ENCODE measurements at regions of chr6 and their contacts with region 1.

Region 1: DNA sequence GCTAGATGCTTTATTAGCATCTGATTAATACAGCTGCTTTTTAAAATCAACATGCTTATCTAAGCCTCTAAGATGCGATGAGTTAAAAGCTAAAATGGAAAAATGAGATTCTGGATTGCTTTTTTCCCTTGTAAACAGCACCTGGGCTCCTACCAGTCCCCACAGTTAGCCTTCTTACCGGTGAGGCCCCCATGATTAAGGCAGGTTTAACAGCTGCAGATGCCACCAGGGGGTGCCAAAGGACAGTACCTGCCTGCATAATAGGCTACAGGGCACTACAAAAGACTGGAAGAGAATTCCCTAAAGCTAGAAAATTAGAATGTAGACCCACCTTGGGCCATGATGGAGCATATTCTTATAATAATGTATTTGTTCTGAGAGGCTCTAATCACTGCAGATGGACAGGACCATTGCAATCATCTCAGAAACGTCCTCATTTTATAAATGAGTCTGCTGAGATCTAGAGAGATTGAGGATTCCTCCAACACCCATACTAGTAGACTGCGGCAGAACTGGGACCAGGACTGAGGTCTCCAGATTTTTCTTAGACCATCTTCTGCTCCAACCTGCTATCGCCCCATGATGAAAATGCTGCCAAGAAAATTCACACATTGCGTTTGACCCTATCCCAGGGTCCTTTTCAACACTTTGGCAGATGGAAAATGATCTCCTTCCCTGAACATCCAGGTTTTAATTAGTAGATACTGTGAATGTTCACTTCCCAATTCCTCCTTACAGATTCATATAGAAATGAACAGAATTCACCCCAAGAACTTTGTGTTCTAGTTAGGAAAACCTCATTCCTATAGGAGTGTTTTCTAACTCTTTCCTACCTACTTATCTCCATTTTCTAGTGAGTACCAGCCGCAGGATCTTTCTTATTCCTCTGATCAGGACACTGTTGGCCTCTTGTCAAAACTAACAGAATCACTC is 148.8 kb downstream of the RPS12 start:
- DNase-seq: peak; percentile 82
- H3K4me3 ChIP-seq: no peak overlapping the region
- H3K27ac ChIP-seq: no peak overlapping the region
- H3K4me1 ChIP-seq: peaks cover 20% of the 10 kb centered on the region
- H3K27me3 ChIP-seq: peaks cover 4 to 6% of the 10 kb centered on the region in 2 experiments
- CTCF ChIP-seq: peak; percentile 71 to 75
- POLR2A ChIP-seq: no peak

Region 2: GRCh38 chr6:132669690-132670291 is 293.4 kb before region 1 on chr6:
- CTCF ChIA-PET with region 1: interaction called, 3 read pairs
- POLR2A ChIA-PET with region 1: no interaction called
- dilution Hi-C with region 1: no loop called
- intact Hi-C with region 1: loop called (anchors 1 kb)
- DNase-seq: peak; percentile 56
- H3K4me3 ChIP-seq: no peak overlapping the region
- H3K27ac ChIP-seq: no peak overlapping the region
- H3K4me1 ChIP-seq: peaks cover 2% of the 10 kb centered on the region
- H3K27me3 ChIP-seq: no peaks in the 10 kb centered on the region
- CTCF ChIP-seq: peak in 1 of 2 donors; percentile 18
- POLR2A ChIP-seq: no peak

Region 3: DNA sequence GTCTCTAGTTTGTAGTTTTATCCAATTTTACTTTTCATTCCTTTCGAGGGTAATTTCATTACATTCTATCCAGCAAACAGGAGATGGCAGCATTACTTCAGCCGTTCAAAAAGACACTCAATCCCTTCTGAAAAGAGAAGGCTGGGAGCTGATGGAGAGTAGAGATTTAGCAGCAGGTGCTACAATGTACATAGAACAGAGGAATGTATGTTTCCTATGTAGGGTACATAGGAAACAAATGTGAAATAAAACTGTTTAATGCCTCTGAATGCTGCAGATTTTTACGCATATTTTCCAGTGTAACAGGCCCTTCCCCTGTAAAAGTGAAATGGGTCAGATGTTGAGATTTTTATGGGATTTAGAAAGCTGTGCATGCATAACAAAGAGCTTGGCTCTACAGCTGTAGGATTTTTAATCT is 132.9 kb before region 1 on chr6:
- CTCF ChIA-PET with region 1: interaction called, 20 read pairs
- POLR2A ChIA-PET with region 1: no interaction called
- dilution Hi-C with region 1: no loop called
- intact Hi-C with region 1: loop called (anchors 5 kb)
- DNase-seq: peak; percentile 34
- H3K4me3 ChIP-seq: no peak overlapping the region
- H3K27ac ChIP-seq: no peak overlapping the region
- H3K4me1 ChIP-seq: no peaks in the 10 kb centered on the region
- H3K27me3 ChIP-seq: no peaks in the 10 kb centered on the region
- CTCF ChIP-seq: peak in 1 of 2 donors; percentile 18
- POLR2A ChIP-seq: no peak

Region 4: DNA sequence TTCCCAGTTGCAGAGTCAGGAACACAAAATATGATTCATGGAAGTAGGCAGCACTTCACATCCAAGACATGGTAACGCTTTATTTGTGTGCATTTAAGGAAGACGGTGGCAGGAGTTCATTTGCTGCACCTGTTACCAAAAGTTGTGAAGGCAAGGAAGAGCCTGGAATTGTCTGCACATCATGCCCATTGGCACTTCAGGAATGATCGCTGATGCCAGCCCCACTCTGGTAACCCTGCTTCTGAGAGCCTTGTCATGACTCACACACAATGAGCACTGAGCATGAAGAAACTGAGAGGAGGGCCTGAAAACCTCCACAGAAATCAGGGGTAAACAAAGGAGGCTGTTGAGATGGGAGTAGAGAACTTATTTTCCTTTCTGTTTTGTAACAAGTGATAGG is 32.2 kb after region 1 on chr6:
- CTCF ChIA-PET with region 1: no interaction called
- POLR2A ChIA-PET with region 1: no interaction called
- dilution Hi-C with region 1: no loop called
- intact Hi-C with region 1: no loop called
- DNase-seq: no peak
- H3K4me3 ChIP-seq: no peak overlapping the region
- H3K27ac ChIP-seq: no peak overlapping the region
- H3K4me1 ChIP-seq: no peaks in the 10 kb centered on the region
- H3K27me3 ChIP-seq: peaks cover 0 to 4% of the 10 kb centered on the region in 2 experiments
- CTCF ChIP-seq: no peak
- POLR2A ChIP-seq: no peak

Region 5: DNA sequence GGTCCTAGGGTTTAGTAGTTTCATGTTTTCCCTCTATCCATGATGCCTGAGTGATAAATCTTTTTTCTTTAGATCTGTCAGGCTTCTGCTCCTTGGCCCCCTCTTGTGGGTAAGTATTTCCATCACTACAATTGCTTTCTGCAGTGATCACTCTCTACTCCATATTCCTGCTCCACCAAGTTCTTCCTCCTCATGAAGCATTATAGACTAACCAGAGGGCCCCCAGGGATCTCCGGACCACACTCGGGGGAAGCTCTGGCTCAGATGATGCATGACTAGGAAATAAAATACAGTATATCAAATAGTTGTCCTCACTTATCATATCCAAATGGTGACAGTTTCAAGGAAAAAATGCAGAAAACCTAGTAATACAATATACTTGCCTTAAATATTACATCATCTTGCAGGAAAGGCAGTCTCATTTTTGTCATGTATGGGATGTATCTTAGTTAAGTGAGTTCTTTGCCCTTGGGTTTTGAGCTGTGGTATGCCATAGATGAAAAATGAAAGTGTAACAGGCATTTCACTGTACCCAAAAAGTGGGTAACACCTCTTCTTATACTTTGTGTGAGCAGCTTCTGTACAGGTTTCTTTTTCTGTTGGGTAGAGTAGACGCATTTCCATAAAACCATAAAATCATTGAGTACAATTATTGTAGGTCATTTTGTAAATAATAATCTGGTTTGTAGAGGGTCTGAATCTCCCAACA is 77.0 kb after region 1 on chr6:
- CTCF ChIA-PET with region 1: interaction called, 29 read pairs
- POLR2A ChIA-PET with region 1: no interaction called
- dilution Hi-C with region 1: no loop called
- intact Hi-C with region 1: loop called (anchors 1 kb)
- DNase-seq: peak; percentile 53
- H3K4me3 ChIP-seq: no peak overlapping the region
- H3K27ac ChIP-seq: no peak overlapping the region
- H3K4me1 ChIP-seq: no peaks in the 10 kb centered on the region
- H3K27me3 ChIP-seq: no peaks in the 10 kb centered on the region
- CTCF ChIP-seq: peak in 1 of 2 donors; percentile 35
- POLR2A ChIP-seq: no peak

Region 6: DNA sequence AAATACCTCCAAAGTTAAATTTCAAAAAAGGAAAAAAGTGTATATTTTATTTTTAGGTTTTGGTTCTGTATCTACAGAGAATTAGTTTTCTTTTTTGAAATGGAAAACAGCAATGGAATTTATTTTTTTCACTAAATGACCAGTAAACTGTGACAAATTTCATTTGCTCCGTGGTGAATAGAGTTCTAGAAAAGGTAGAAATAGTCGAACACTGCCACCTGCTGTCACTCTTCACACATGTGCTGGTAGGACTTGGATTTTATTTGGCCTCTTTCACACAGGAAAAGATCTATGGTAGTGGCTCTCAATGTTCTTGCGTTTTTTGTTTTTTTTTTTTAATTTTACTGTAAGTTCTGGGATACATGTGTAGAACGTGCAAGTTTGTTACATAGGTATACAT is 590.5 kb after region 1 on chr6:
- CTCF ChIA-PET with region 1: interaction called, 35 read pairs
- POLR2A ChIA-PET with region 1: no interaction called
- dilution Hi-C with region 1: no loop called
- intact Hi-C with region 1: loop called (anchors 1 kb)
- DNase-seq: peak; percentile 44
- H3K4me3 ChIP-seq: no peak overlapping the region
- H3K27ac ChIP-seq: no peak overlapping the region
- H3K4me1 ChIP-seq: no peaks in the 10 kb centered on the region
- H3K27me3 ChIP-seq: peaks cover 2 to 4% of the 10 kb centered on the region in 2 experiments
- CTCF ChIP-seq: peak; percentile 23 to 37
- POLR2A ChIP-seq: no peak

Measured in endothelial cell of umbilical vein (primary cell).